ENCODE measurements at regions of chr3 and their contacts with region 1.

Region 1: DNA sequence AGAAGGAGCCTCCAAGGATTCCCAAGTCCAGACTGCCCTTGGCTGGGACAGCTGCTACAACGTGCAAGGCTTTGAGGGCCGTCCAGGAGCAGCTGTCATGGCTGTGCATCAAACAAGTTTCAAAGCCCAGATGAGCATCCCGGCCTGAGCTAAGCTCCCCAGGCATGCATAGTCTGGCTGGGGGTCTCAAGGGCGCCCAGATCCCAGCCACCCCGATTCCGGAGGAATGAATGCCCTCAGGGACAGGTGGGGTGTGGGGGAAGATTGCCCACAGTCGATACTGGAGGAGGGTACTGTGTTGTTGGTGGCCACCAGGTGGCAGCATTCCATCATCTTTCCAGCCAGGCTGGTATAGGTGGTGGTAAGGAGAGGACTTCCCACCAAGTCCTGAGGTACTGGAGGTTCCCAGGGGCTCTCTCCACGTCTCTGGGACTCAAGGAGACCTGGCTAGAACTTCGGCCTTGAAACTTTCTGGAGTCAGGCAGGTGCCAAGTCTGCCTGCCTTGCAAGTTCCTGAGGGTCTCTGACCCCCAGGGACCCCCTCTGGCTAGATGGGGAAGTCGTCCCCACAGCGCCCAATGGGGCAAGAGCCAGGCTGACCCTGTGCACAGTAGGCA is 32.8 kb downstream of the RBM5 start:
- DNase-seq: peak; percentile 57 to 83 (median 79)
- H3K4me3 ChIP-seq: no peak overlapping the region
- H3K27ac ChIP-seq: peak overlapping the region in 30 of 59 donors; percentile 3 to 75 (median 50)
- H3K27me3 ChIP-seq: no peaks in the 10 kb centered on the region
- CTCF ChIP-seq: peak; percentile 72 to 95 (median 88)

Region 2: GRCh38 chr3:49339945-49340800 is 781.4 kb before region 1 on chr3 and contains the start of gene USP4:
- intact Hi-C with region 1: no loop called
- DNase-seq: peak; percentile 63 to 92 (median 84)
- H3K4me3 ChIP-seq: peak within 1 kb of the TSS; percentile 58 to 97 (median 87)
- H3K27ac ChIP-seq: peak within 1 kb of the TSS; percentile 54 to 97 (median 90)
- H3K27me3 ChIP-seq: no peaks in the 10 kb centered on the region
- CTCF ChIP-seq: peak in 51 of 56 donors; percentile 21 to 74 (median 47)
- total RNA-seq, gene USP4: 57.2 to 94.0 (median 74.4) TPM

Region 3: DNA sequence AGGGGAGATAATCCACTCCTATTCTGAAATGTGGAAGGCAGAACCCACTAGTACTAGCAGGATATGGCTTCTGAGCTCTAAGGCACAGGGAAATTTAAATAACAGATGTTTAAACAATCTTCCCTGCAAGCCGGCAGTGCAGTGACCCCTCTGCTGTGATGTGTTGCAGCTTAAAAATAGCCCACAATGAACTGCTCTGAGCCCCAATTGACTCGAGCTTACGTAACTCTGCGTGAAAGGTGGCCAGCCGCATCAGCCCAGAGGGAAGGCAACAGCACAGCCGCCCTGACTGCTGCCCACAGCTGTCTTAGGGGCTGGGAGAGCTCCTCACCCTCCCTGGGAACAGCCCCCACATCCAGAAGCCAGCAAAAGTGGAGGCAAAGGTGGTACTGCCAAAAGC is 239.4 kb before region 1 on chr3:
- intact Hi-C with region 1: no loop called
- DNase-seq: no peak
- H3K4me3 ChIP-seq: no peak overlapping the region
- H3K27ac ChIP-seq: peak overlapping the region in 2 of 59 donors; percentile 6 to 13
- H3K27me3 ChIP-seq: no peaks in the 10 kb centered on the region
- CTCF ChIP-seq: no peak

Region 4: GRCh38 chr3:50186096-50186495 is 64.6 kb after region 1 on chr3:
- intact Hi-C with region 1: loop called (anchors 1 to 2 kb)
- DNase-seq: no peak
- H3K4me3 ChIP-seq: no peak overlapping the region
- H3K27ac ChIP-seq: no peak overlapping the region
- H3K27me3 ChIP-seq: no peaks in the 10 kb centered on the region
- CTCF ChIP-seq: no peak

Region 5: DNA sequence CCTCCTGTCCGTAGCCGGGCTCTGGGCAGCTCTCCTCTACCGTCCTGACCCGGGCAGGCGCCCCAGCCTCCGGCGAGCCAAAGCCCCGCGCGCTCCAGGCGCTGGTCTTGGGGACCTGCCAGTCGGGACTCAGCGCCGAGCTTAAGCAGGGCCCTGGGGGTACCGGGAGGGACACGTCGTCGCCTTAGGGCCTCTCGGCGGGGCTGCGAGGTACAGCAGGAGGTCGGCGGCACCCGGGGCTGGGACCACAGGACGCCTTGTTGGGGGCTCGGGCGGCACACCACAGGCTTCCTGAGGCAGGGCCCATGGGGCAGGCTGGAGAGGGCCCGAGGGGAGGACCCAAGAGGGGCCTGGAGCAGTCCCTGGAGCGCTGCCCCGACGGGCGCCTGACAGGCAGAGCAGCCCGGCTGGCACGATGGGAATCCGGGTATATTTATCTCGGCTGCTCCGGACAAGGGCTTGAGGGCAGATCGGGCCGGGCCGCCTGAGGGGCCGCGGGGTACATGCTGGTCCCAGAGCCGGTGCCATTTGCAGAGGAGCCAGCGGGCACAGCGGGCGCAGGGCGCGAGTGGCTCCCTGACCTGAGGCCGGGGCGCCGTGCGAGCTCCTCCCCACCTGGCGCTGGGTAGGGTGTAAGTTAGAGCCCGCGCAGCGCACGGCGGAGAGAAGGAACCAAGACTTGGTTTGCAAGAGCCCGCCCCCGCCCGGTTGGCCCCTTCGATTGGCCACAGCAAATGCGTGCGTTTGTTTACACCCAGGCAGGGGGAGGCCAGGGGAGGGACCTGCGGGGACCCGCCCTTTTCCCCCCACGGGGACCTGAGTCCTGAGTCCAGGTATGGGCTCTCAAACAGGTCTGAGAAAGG is 84.1 kb after region 1 on chr3:
- intact Hi-C with region 1: no loop called
- DNase-seq: peak in 1 of 10 donors; percentile 53
- H3K4me3 ChIP-seq: peak overlapping the region; percentile 39 to 86 (median 68)
- H3K27ac ChIP-seq: peak overlapping the region in 51 of 59 donors; percentile 4 to 95 (median 65)
- H3K27me3 ChIP-seq: peaks cover 0 to 36% (median 8%) of the 10 kb centered on the region in 45 donors
- CTCF ChIP-seq: no peak

Measured in dorsolateral prefrontal cortex (tissue), 120 donors.